Vagina (tissue), 2 donors: ENCODE measurements at regions of chr20 and their contacts with region 1.

Region 1: GRCh38 chr20:50929299-50930138 is 1.7 kb downstream of the ADNP start:
- DNase-seq: no peak
- H3K4me3 ChIP-seq: peak overlapping the region; percentile 95 to 97
- H3K27ac ChIP-seq: peak overlapping the region; percentile 87
- H3K4me1 ChIP-seq: peaks cover 64% of the 10 kb centered on the region
- H3K27me3 ChIP-seq: no peaks in the 10 kb centered on the region
- CTCF ChIP-seq: peak; percentile 57 to 76 (median 69)
- POLR2A ChIP-seq: no peak

Region 2: GRCh38 chr20:50292324-50293243 is 636.9 kb before region 1 on chr20:
- intact Hi-C with region 1: no loop called
- DNase-seq: peak in 1 of 2 donors; percentile 98
- H3K4me3 ChIP-seq: no peak overlapping the region
- H3K27ac ChIP-seq: peak overlapping the region; percentile 88
- H3K4me1 ChIP-seq: peaks cover 41% of the 10 kb centered on the region
- H3K27me3 ChIP-seq: no peaks in the 10 kb centered on the region
- CTCF ChIP-seq: no peak
- POLR2A ChIP-seq: no peak

Region 3: DNA sequence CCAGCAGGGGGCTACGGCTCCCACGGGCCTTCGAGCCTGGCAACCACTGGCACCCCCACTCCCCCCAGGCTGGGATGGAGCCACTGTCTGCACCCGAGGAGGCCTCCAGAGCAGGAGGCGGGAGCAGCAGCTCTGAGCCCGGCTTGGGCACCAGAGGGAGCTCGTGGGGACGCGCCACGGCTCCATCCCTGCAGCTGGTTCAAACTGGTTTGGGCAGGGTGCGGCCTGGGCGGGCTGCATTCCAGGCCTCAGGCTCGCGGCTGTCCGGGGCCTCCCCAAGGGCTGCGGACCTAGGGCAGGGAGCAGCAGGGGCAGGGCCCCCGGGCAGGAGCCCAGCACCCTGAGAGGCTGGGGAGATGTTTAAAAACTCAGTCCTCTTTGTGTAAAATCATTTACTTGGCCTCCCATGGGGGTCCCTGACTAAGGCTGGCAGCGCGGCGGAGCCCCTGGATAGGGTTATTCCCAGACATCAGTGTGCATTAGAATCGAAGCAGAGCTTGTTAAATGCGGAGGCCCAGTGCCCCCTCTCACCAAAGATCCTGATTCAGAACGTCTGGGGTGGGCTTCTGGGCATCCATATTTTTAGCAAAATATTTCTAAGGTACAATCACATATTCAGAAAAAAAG is 138.8 kb before region 1 on chr20:
- intact Hi-C with region 1: loop called (anchors 5 kb)
- DNase-seq: peak in 1 of 2 donors; percentile 92
- H3K4me3 ChIP-seq: no peak overlapping the region
- H3K27ac ChIP-seq: peak overlapping the region; percentile 89
- H3K4me1 ChIP-seq: peaks cover 41% of the 10 kb centered on the region
- H3K27me3 ChIP-seq: no peaks in the 10 kb centered on the region
- CTCF ChIP-seq: peak; percentile 57 to 67 (median 61)
- POLR2A ChIP-seq: no peak

Region 4: GRCh38 chr20:50815162-50815989 is 114.1 kb before region 1 on chr20:
- intact Hi-C with region 1: loop called (anchors 5 kb)
- DNase-seq: no peak
- H3K4me3 ChIP-seq: no peak overlapping the region
- H3K27ac ChIP-seq: peak overlapping the region; percentile 10
- H3K4me1 ChIP-seq: no peaks in the 10 kb centered on the region
- H3K27me3 ChIP-seq: no peaks in the 10 kb centered on the region
- CTCF ChIP-seq: no peak
- POLR2A ChIP-seq: no peak